MCF 10A (cell line): ENCODE measurements at regions of chr16 and their contacts with region 1.

Region 1: DNA sequence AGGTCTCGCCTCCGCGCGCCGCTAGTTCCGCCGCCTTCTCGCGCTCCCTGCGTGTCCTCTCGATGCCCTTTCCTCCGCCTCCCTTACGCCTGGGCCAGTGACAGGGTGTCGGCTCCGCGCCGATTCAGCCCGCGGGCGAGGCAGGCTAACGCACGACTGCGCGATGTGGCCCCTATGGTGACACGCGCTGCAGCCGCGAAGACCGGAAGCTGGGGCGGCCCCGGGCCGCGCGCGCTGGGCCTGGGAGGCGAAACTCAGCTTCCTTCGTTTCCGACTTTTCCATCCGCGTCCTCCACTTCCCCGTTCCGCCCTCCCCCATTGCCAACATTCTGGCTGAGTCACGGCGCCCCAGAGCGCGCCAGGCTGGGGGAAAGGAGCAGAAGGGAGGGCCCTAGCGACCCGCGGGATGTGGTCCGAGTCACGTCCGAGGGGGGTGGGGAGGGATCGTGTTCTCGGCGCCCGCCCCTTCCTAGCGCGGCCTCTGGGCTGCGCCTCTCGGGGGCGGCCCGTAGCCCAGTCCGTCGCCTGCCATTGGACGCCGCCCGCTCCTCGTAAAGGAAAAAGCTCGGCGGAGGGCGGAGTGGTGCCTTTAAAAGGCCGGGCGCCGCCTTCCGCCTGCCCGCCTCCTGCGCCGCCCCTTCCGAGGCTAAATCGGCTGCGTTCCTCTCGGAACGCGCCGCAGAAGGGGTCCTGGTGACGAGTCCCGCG is at the start of gene ALDOA:
- DNase-seq: peak; percentile 99
- H3K4me3 Mint-ChIP-seq: peak within 1 kb of the TSS; percentile 97
- H3K27ac Mint-ChIP-seq: peak within 1 kb of the TSS; percentile 95
- H3K4me1 Mint-ChIP-seq: peaks cover 25% of the 10 kb centered on the region
- H3K27me3 Mint-ChIP-seq: no peaks in the 10 kb centered on the region
- CTCF ChIP-seq: no peak
- total RNA-seq, gene ALDOA: 1,141 and 1,165 TPM in 2 replicates

Region 2: DNA sequence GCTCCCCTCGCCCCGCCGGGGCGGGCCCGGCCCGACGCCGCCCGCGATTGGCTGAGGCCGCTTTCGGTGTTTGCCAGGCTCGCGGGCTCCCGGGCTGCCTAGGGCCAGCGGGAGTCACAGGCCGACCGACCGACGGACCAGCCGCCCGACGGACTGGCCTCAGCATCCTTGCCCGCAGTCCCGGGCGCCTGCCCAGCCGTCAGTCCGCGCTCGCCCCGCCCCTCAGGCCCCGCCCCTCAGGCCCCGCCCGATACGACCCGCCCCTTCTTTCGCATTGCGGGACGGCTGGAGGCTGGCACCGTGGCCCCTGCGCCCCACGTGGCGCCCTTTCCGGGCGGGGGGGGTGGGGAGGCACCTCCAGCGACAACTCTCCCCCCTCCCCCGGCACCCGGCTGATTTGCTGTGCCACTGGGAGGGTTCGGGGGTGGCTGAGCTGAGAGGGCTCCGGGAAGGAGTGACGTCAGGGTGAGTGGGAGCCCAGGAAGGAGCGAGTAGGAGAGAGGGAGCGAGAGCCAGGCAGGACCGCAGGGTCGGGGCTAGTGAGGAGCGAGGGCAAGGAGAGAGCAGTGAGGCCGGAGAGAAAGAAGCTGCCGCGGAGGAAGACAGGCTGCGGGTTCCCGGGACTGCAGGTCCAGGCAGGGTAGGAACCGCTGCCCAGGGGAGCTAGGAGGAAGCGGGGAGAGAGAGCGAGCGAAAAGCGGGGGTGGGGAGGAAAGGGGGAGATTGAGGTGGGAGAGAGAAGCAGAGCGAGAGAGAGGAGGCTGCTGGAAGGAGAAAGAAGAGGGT is 165.0 kb before region 1 on chr16 and contains the start of gene ASPHD1:
- CTCF ChIA-PET with region 1: no interaction called
- POLR2A ChIA-PET with region 1: no interaction called
- intact Hi-C with region 1: no loop called
- DNase-seq: peak; percentile 65
- H3K4me3 Mint-ChIP-seq: peak within 1 kb of the TSS; percentile 91
- H3K27ac Mint-ChIP-seq: peak within 1 kb of the TSS; percentile 81
- H3K4me1 Mint-ChIP-seq: peaks cover 10% of the 10 kb centered on the region
- H3K27me3 Mint-ChIP-seq: peaks cover 27% of the 10 kb centered on the region
- CTCF ChIP-seq: no peak
- total RNA-seq, gene ASPHD1: 4.8 and 5.7 TPM in 2 replicates

Region 3: DNA sequence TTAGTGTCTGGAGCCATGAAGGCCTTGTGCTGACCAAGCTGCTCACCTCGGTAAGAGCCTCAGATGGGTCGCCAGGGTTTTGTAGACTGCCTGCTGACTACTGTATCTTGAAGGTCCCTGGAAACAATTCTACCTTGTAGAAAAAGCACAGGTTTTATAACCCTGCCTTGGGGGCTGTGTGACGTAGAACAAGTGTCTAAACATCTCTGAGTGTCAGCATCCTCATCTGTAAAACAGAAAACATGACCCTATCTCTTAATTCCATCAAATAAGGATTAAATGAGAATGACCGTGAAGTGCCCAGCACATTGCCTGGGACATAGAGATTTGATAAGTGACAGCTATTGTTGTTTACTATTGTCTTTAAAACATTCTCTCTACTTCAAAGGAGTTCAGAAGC is 97.1 kb before region 1 on chr16:
- CTCF ChIA-PET with region 1: no interaction called
- POLR2A ChIA-PET with region 1: no interaction called
- intact Hi-C with region 1: no loop called
- DNase-seq: no peak
- H3K4me3 Mint-ChIP-seq: no peak overlapping the region
- H3K27ac Mint-ChIP-seq: no peak overlapping the region
- H3K4me1 Mint-ChIP-seq: peaks cover 3% of the 10 kb centered on the region
- H3K27me3 Mint-ChIP-seq: no peaks in the 10 kb centered on the region
- CTCF ChIP-seq: no peak

Region 4: DNA sequence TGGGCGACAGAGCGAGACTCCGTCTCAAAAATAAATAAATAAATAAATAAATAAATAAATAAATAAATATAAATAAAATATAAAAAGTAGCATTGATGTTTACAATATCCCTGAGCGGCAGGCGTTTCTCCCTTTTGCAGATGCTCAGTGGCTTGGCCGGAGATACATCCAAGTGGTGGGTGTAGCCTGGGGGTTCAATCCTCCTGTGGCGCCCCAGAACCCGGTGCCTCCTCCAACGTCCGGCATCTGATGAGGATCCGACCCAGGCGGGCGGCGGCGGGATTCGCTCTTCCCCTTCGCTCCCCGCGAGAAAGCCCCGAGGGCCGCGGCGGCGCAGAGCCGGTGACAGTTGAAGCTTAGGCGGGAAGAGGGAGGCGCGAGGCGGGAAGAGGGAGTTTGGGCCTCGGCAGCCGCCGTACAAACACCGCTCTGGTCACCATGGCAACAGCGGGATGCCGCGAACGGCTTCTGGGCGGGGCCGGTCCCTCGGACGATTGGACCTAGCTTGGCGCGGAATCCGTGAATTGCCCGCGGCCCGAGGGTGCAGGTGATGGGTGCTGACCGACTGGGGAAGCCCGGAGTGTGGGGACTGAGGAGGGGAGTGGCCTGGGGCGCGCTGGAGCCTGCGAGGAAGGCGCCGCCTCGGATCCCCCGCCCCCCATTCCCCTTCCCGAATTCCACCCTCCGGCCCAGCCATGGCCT is 12.5 kb before region 1 on chr16:
- CTCF ChIA-PET with region 1: interaction called, 9 read pairs
- POLR2A ChIA-PET with region 1: interaction called, 173 read pairs
- intact Hi-C with region 1: loop called (anchors 1 kb)
- DNase-seq: peak; percentile 92
- H3K4me3 Mint-ChIP-seq: peak overlapping the region; percentile 77
- H3K27ac Mint-ChIP-seq: peak overlapping the region; percentile 50
- H3K4me1 Mint-ChIP-seq: peaks cover 28% of the 10 kb centered on the region
- H3K27me3 Mint-ChIP-seq: no peaks in the 10 kb centered on the region
- CTCF ChIP-seq: no peak

Region 5: GRCh38 chr16:30082545-30083090 is 17.3 kb after region 1 on chr16:
- CTCF ChIA-PET with region 1: no interaction called
- POLR2A ChIA-PET with region 1: interaction called, 155 read pairs
- intact Hi-C with region 1: no loop called
- DNase-seq: no peak
- H3K4me3 Mint-ChIP-seq: no peak overlapping the region
- H3K27ac Mint-ChIP-seq: no peak overlapping the region
- H3K4me1 Mint-ChIP-seq: peaks cover 9% of the 10 kb centered on the region
- H3K27me3 Mint-ChIP-seq: no peaks in the 10 kb centered on the region
- CTCF ChIP-seq: no peak

Region 6: DNA sequence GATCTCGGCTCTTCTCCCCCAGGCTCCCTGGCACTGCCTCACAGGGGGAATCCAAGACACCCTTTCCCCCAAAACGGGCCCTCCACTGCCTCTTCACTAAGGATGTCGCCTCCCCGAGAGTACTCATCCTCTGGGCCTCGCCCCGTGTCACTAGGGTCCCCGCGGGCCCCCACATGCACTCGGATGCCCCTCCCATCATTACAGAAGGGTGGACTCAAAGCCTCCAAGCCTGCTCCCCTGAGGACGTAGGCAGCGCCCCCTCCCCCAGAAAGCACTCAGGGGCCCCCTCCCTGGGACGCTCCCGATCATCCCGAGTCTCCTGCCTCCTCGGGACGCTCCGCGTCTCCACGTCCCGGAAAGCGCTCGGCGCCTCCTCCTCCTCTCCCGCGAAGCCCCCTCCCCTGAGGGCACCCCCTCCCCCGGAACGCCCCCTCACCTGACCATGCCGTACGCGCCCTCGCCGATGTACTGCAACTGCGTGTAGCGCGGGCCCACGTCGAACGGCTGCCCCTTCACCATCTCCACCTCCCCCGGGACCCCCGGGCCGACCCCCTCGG is 57.4 kb after region 1 on chr16:
- CTCF ChIA-PET with region 1: interaction called, 5 read pairs
- POLR2A ChIA-PET with region 1: interaction called, 24 read pairs
- intact Hi-C with region 1: no loop called
- DNase-seq: no peak
- H3K4me3 Mint-ChIP-seq: peak overlapping the region; percentile 73
- H3K27ac Mint-ChIP-seq: peak overlapping the region; percentile 63
- H3K4me1 Mint-ChIP-seq: peaks cover 10% of the 10 kb centered on the region
- H3K27me3 Mint-ChIP-seq: no peaks in the 10 kb centered on the region
- CTCF ChIP-seq: no peak